Activated B cell treated with CpG ODN at 0.5 μM for 24 hours (primary cell): ENCODE measurements at regions of chr7 and their contacts with region 1.

Region 1: GRCh38 chr7:3300651-3301378 is at the start of gene SDK1:
- DNase-seq: peak; percentile 94
- ATAC-seq: peak; percentile 95
- H3K4me3 Mint-ChIP-seq: peak within 1 kb of the TSS; percentile 84
- H3K27ac Mint-ChIP-seq: no peak within 1 kb of the TSS
- H3K4me1 Mint-ChIP-seq: peaks cover 11% of the 10 kb centered on the region
- H3K27me3 Mint-ChIP-seq: peaks cover 33% of the 10 kb centered on the region
- CTCF ChIP-seq: no peak
- total RNA-seq, gene SDK1: 0.32 and 1.3 TPM in 2 replicates

Region 2: DNA sequence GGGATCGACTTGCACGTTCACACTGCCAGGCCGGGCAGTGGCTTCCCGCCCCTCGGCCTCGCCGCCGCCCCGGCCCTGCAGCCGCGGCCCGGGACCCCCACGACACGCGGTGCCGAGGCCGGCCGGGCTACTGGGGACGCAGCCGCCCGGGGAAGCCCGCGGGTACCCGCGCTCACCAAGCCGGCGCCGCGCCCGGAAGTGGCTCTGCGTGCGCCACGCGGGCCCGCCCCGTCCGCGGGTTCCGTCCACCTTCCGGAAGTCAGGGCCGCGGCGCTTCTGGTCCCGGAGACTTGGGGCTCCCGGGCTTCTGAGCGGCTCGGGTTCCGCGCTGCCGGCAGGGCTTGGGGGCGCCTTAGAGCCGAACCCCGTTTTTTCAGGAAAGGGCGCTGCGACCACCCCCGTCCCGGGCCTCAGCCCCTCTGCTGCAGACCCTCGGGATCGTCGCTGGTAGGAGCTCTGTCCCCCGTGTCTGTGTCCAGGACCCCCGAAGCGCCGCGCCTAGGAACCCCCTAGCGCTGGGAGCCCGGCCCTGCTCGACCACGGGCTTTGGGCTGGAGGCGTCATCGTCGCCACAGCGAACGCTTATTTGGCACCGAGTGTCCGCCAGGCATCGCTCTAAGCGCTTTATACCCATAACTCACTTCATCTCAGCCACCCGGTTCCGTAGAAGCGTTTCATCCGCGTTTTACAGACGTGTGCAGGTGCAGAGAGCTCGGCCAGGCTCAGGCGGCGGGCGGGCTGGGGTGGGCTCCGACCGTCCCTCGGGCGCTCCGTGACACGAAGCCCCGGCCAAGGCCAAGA is 1730.8 kb before region 1 on chr7 and contains the start of gene PSMG3:
- CTCF ChIA-PET with region 1: no interaction called
- POLR2A ChIA-PET with region 1: interaction called, 10 read pairs
- intact Hi-C with region 1: no loop called
- DNase-seq: peak; percentile 91
- ATAC-seq: peak; percentile 90
- H3K4me3 Mint-ChIP-seq: peak within 1 kb of the TSS; percentile 86
- H3K27ac Mint-ChIP-seq: peak within 1 kb of the TSS; percentile 88
- H3K4me1 Mint-ChIP-seq: peaks cover 26% of the 10 kb centered on the region
- H3K27me3 Mint-ChIP-seq: no peaks in the 10 kb centered on the region
- CTCF ChIP-seq: no peak
- total RNA-seq, gene PSMG3: 29.5 and 30.5 TPM in 2 replicates

Region 3: DNA sequence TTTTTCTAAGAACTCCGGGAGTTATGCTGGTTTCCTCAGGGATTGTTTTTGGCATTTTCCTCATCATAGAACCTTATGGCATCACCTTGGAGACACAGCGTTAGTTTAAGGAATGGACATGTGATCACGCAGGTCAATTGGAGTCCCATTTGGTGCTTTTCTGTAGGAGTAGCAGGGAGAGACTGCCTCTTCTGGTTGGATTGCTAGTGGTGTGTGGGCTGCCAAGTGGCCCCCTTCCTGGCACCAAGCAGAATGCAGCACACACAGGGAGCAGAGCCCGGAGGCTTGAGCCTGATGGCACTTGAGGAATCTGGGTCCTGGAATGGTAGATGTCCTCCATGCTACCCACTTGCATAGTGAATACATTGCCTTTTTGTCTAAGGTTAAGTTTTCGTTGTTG is 58.2 kb after region 1 on chr7:
- CTCF ChIA-PET with region 1: no interaction called
- POLR2A ChIA-PET with region 1: no interaction called
- intact Hi-C with region 1: no loop called
- DNase-seq: no peak
- ATAC-seq: no peak
- H3K4me3 Mint-ChIP-seq: no peak overlapping the region
- H3K27ac Mint-ChIP-seq: no peak overlapping the region
- H3K4me1 Mint-ChIP-seq: no peaks in the 10 kb centered on the region
- H3K27me3 Mint-ChIP-seq: peaks cover 8% of the 10 kb centered on the region
- CTCF ChIP-seq: no peak

Region 4: DNA sequence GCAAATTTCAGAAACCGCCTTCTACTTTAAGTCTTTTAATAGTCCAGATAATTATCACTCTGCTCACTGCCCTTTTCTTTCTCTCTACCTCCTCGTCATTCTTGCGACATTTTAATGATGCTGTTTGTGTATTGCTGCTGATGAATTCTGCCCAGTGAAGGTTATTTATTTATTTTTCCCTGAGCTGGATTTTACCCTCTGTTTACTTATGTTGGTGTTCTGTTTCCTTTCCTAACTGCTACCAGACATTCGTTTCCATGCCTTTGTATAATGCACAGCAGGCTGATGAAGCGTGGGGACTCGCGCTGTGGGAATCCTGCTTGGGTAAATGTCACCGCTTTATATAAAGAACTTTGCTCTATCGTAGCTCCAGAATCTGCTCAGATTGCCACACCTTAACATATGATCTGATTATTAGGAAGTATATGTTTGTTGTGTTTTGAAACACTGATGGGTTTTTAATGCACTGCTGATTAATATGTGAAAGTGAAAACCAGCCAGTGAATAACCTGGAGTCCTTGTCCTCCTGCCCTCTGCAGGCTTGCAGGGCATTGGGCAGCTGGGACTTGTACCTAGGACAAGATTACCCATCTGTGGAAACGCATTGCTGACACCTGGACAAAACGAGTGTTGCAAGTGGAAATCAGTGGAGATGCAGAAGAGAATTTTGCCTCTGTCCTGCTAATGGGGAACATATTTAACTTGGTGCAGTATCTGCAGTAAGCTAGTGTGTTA is 291.8 kb after region 1 on chr7:
- CTCF ChIA-PET with region 1: no interaction called
- POLR2A ChIA-PET with region 1: no interaction called
- intact Hi-C with region 1: loop called (anchors 1 kb)
- DNase-seq: no peak
- ATAC-seq: no peak
- H3K4me3 Mint-ChIP-seq: no peak overlapping the region
- H3K27ac Mint-ChIP-seq: no peak overlapping the region
- H3K4me1 Mint-ChIP-seq: peaks cover 29% of the 10 kb centered on the region
- H3K27me3 Mint-ChIP-seq: no peaks in the 10 kb centered on the region
- CTCF ChIP-seq: no peak

Region 5: GRCh38 chr7:3673524-3673923 is 372.7 kb after region 1 on chr7:
- CTCF ChIA-PET with region 1: no interaction called
- POLR2A ChIA-PET with region 1: no interaction called
- intact Hi-C with region 1: loop called (anchors 1 kb)
- DNase-seq: no peak
- ATAC-seq: no peak
- H3K4me3 Mint-ChIP-seq: no peak overlapping the region
- H3K27ac Mint-ChIP-seq: no peak overlapping the region
- H3K4me1 Mint-ChIP-seq: peaks cover 12% of the 10 kb centered on the region
- H3K27me3 Mint-ChIP-seq: no peaks in the 10 kb centered on the region
- CTCF ChIP-seq: no peak

Region 6: GRCh38 chr7:3722396-3722922 is 421.6 kb after region 1 on chr7:
- CTCF ChIA-PET with region 1: no interaction called
- POLR2A ChIA-PET with region 1: no interaction called
- intact Hi-C with region 1: loop called (anchors 5 kb)
- DNase-seq: peak; percentile 18
- ATAC-seq: peak; percentile 64
- H3K4me3 Mint-ChIP-seq: no peak overlapping the region
- H3K27ac Mint-ChIP-seq: no peak overlapping the region
- H3K4me1 Mint-ChIP-seq: no peaks in the 10 kb centered on the region
- H3K27me3 Mint-ChIP-seq: peaks cover 2% of the 10 kb centered on the region
- CTCF ChIP-seq: no peak

Region 7: DNA sequence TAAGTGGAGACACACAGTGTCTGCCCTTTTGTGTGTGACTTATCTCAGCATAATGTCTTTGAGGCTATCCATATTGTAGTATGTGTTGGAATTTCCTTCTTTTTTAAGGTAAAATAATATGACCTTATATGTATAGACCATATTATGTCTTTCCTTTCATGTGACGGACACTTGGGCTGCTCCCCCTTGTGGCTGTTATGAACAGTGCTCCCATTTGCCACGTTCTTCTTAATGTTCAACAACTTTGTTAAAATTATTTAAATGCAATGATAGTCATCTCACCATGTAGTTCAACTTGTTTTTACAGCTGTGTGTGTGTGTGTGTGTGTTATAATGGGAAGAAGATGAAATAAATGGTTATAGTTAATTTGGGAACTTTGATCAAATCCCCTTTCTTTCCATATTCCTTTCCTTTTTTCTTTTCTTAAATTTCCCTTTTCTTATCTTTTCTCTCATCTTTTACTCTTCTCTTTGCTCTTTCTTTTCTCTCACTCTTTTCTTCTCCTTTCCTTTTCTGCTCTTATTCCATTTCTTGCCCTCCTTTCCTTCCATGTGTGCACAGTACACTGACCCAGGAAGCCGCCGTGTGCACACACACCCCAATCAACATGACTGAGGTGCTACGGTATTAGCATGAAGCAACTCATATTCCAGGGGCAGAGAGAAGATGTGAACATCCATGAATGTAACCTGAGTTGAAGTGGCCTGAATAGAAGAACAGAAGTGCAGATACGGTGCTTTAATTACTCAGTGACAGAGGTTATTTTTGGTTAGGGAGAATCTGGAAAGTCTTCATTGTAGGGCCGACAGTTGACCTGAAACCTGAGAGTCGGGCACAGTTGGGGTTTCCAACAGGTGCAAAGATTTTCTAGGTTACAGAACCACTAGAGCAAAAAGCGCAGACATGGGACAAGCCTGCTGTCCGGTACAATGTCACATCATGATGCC is 596.9 kb after region 1 on chr7:
- CTCF ChIA-PET with region 1: interaction called, 3 read pairs
- POLR2A ChIA-PET with region 1: no interaction called
- intact Hi-C with region 1: loop called (anchors 1 kb)
- DNase-seq: no peak
- ATAC-seq: peak; percentile 56
- H3K4me3 Mint-ChIP-seq: no peak overlapping the region
- H3K27ac Mint-ChIP-seq: no peak overlapping the region
- H3K4me1 Mint-ChIP-seq: no peaks in the 10 kb centered on the region
- H3K27me3 Mint-ChIP-seq: peaks cover 9% of the 10 kb centered on the region
- CTCF ChIP-seq: peak; percentile 97

Region 8: DNA sequence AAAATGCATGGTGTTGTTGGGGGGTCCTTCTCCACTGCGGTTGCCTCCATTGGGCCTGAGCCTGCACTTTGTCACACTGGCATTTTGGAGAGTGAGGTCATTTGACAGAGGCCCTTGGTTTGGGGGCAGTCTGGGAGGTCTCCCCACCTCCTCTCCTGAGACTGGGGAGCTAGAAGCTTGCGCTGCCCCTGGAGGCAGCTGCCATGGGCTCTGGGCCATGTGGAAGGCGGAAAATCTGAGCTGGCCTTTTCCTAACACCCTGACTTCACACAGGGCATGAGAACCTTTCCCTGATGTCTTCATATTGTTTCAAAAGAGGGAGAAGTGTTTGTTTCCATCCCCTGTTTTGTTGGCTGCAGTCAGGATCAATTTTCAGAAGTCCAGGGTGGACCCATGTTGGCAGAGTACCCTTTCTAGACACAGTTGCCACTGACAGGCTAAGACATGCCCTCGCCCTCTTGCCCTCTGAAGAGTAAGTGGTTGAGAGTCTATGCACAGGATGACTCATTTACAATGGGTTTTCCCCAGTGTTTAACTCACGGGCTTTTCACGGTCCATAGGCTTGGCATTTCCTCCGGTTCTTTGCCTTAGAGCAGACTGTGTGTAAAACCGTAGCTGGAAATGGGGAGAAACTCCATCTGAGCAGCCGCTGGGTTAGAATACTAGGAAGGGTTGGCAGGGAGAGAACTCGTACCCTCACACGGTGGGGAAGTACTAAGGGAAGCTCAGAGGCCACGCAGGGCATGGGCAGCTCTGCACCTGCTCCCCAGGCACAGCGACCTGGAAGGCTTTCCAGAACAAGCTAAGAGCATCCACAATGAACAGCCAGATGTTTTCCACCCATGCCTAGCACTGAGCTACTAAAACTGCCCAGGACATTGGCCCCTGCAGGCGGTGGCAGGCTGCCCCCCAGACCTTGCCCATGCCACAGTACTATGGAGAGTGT is 655.2 kb after region 1 on chr7:
- CTCF ChIA-PET with region 1: no interaction called
- POLR2A ChIA-PET with region 1: no interaction called
- intact Hi-C with region 1: loop called (anchors 2 kb)
- DNase-seq: no peak
- ATAC-seq: peak; percentile 88
- H3K4me3 Mint-ChIP-seq: peak overlapping the region; percentile 39
- H3K27ac Mint-ChIP-seq: peak overlapping the region; percentile 60
- H3K4me1 Mint-ChIP-seq: peaks cover 35% of the 10 kb centered on the region
- H3K27me3 Mint-ChIP-seq: no peaks in the 10 kb centered on the region
- CTCF ChIP-seq: no peak